GM10248 (cell line): ENCODE measurements at regions of chr17 and their contacts with region 1.

Region 1: DNA sequence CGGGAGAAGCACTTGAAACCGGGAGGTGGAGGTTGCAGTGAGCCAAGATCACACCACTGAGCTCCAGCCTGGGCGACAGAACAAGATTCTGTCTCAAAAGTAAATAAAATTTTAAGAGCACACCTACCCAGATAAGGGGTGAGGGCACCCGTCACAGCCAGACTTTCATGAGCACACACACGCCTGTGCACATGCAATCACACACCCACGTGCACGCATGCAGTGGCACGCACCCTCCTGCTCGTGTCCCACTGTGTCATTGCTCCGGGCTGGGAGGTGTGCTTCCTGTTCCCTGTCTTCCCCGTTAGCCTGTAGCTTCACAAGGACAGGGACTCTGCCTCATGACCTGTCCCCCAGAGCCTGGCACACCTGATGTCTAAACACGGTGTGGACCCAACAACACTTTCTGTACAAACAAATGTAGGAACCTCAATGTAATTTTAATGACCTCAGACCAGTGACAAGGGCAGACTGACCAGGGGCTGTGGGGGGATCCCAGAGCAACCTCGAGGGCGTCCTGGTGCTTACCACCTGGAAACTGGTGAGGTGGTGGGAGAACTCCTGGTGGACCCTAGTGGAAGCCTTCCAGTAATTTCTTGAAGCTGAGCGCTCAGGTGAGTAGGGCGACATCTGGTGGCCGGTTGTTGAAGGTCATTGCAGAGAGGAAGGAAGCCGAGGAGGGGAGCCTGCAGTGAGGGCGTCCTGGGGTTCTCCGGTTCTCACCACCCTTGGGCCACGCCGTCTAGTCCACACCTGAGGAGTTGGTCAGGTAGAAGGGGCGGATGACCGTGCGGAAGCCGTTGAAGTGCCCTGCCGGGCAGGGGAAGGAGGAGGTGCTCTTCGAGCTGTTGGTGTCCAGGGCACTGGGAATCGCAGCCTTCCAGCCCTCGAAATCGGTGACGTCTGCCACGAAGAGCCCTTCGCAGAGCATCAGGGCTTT is 8.6 kb downstream of the LGALS3BP start:
- DNase-seq: peak; percentile 87
- CTCF ChIP-seq: peak; percentile 89

Region 2: DNA sequence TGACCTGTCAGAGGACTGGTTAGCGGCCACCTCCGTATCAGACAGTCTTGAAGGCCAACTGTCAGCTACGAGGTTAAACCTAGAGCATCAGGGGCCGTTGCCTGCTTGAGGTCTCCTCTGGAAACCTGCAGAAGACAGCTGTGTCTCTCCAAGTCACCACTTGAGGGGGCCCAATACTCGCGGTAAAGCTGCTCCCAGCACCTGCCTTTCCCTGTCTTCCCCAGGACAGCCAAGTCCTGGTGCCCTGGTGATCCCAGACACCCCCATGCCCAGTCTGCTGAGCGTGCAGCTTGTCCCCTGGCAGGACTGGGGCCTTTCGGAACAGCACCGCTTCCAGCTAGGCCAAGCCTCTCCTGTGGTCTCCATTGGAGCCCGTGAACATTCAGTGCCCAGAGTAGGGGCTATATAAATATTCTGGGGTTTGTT is 474.0 kb before region 1 on chr17:
- CTCF ChIA-PET with region 1: interaction called, 19 read pairs
- POLR2A ChIA-PET with region 1: no interaction called
- DNase-seq: peak; percentile 85
- CTCF ChIP-seq: peak; percentile 52

Region 3: GRCh38 chr17:78953356-78954265 is 17.5 kb before region 1 on chr17:
- CTCF ChIA-PET with region 1: interaction called, 24 read pairs
- POLR2A ChIA-PET with region 1: interaction called, 4 read pairs
- DNase-seq: no peak
- CTCF ChIP-seq: no peak

Region 4: GRCh38 chr17:78986048-78986648 is 15.0 kb after region 1 on chr17:
- CTCF ChIA-PET with region 1: interaction called, 22 read pairs
- POLR2A ChIA-PET with region 1: no interaction called
- DNase-seq: no peak
- CTCF ChIP-seq: no peak